ENCODE measurements at regions of chr20 and their contacts with region 1.

Region 1: DNA sequence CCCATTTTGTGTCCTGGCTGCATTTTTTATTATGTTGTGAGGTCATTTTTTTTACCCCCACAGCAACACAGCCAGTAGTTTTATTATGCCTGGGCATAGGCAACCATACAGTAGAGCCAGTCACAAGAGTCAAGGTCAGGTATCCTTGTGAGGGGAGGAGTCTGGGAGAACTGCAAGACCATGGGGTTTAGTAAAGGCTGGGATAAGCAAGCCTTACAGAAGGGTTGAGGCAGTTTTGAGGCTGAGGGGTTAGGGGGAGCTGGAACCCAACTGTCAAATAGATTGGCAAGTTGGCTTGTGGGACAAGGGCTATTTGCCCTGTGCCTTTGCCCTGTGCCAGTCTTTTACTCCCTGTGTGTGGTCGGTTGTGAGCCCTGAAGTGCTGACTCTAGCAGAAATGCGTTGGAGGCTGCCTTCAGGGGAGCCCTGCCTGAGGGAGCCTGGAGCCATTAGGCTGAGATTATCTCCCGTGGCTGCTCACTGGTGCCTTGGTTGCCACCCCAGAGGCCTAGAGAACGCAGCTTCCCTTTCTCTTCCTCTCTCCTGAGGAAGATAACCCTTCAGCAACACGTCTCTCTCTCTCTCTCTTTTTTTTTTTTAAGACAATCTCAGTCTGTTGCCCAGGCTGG is 31.1 kb downstream of the RALY start:
- DNase-seq: no peak
- H3K4me3 ChIP-seq: no peak overlapping the region
- H3K27ac ChIP-seq: no peak overlapping the region
- H3K4me1 ChIP-seq: peaks cover 0 to 49% (median 20%) of the 10 kb centered on the region in 4 experiments
- H3K27me3 ChIP-seq: no peaks in the 10 kb centered on the region

Region 2: GRCh38 chr20:33992923-33993575 is 31.8 kb before region 1 on chr20:
- CTCF ChIA-PET with region 1: interaction called, 10 read pairs
- POLR2A ChIA-PET with region 1: interaction called, 4 read pairs
- DNase-seq: peak; percentile 98 to 99 (median 99)
- H3K4me3 ChIP-seq: peak overlapping the region; percentile 90 to 99 (median 95)
- H3K27ac ChIP-seq: peak overlapping the region; percentile 93 to 96
- H3K4me1 ChIP-seq: peaks cover 15 to 40% (median 31%) of the 10 kb centered on the region in 4 experiments
- H3K27me3 ChIP-seq: no peaks in the 10 kb centered on the region

Measured in common myeloid progenitor, CD34-positive (primary cell).